ENCODE measurements at regions of chr18 and their contacts with region 1.

Region 1: GRCh38 chr18:13381944-13382365 is 163.4 kb downstream of the LDLRAD4 start:
- DNase-seq: no peak
- ATAC-seq: peak; percentile 31; the same call in 2 of the 3 replicates
- H3K4me3 ChIP-seq: 0 out of 2 replicates have a peak overlapping the region, but pooled peaks have one; percentile 15
- H3K27ac ChIP-seq: no peak overlapping the region
- H3K4me1 ChIP-seq: peaks cover 5% of the 10 kb centered on the region
- H3K27me3 ChIP-seq: no peaks in the 10 kb centered on the region; a peak in 1 of 4 replicates
- CTCF ChIP-seq: no peak
- EP300 ChIP-seq: no peak
- POLR2A ChIP-seq: no peak
- RAD21 ChIP-seq: no peak

Region 2: GRCh38 chr18:13319629-13320028 is 62.3 kb before region 1 on chr18:
- CTCF ChIA-PET with region 1: no interaction called
- POLR2A ChIA-PET with region 1: no interaction called
- RAD21 ChIA-PET with region 1: no interaction called
- SMC1A ChIA-PET with region 1: no interaction called
- in situ Hi-C with region 1: no loop called
- intact Hi-C with region 1: loop called (anchors 10 kb)
- DNase-seq: no peak
- ATAC-seq: no peak
- H3K4me3 ChIP-seq: no peak overlapping the region
- H3K27ac ChIP-seq: no peak overlapping the region
- H3K4me1 ChIP-seq: no peaks in the 10 kb centered on the region
- H3K27me3 ChIP-seq: no peaks in the 10 kb centered on the region
- CTCF ChIP-seq: no peak
- EP300 ChIP-seq: no peak
- POLR2A ChIP-seq: no peak
- RAD21 ChIP-seq: no peak

Region 3: DNA sequence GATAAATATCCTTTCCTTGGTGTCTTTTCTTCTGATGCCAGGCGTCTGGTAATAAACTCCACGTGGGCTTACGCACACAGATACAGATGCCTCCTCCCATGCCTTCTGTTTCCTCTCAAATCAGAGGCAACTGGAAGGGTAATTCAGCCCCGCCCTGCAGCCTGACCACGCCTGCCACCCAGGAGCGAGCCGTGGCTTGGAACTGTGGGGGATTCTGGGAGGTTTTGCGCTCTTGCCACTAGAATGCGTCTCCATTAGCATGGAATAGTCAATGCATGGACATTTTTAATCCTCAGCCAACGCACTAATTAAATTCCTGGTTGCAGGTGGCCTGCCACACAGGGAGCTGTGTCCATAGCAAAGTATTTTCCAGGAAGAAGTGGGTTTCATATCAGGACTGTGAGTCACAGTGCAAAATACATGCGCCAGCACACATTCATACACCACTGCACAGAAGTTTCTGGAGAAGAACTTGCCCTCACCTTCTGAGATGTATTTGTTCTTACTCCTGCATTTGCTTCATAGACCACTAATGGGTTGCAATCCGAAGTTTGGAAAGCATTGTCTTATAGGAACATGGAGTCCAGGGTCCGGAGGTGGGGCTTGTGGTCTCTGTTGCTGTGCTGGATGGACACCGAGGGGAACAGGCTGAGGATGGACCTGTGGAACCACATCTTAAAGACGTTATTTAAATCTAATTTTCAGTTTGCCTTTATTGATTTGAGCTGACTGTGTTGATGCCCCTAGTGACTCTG is 12.0 kb before region 1 on chr18:
- CTCF ChIA-PET with region 1: no interaction called
- POLR2A ChIA-PET with region 1: no interaction called
- RAD21 ChIA-PET with region 1: no interaction called
- SMC1A ChIA-PET with region 1: no interaction called
- in situ Hi-C with region 1: no loop called
- intact Hi-C with region 1: no loop called
- DNase-seq: no peak
- ATAC-seq: no peak
- H3K4me3 ChIP-seq: no peak overlapping the region
- H3K27ac ChIP-seq: no peak overlapping the region
- H3K4me1 ChIP-seq: peaks cover 13% of the 10 kb centered on the region
- H3K27me3 ChIP-seq: no peaks in the 10 kb centered on the region; a peak in 1 of 4 replicates
- CTCF ChIP-seq: no peak
- EP300 ChIP-seq: no peak
- POLR2A ChIP-seq: no peak
- RAD21 ChIP-seq: no peak

Region 4: GRCh38 chr18:13464432-13465123 is 82.6 kb after region 1 on chr18:
- CTCF ChIA-PET with region 1: no interaction called
- POLR2A ChIA-PET with region 1: no interaction called
- RAD21 ChIA-PET with region 1: no interaction called
- SMC1A ChIA-PET with region 1: no interaction called
- in situ Hi-C with region 1: no loop called
- intact Hi-C with region 1: no loop called
- DNase-seq: peak; percentile 44
- ATAC-seq: peak; percentile 86
- H3K4me3 ChIP-seq: peak overlapping the region; percentile 52
- H3K27ac ChIP-seq: peak overlapping the region; percentile 29
- H3K4me1 ChIP-seq: peaks cover 9% of the 10 kb centered on the region; the same call in 1 of the 2 replicates
- H3K27me3 ChIP-seq: no peaks in the 10 kb centered on the region
- CTCF ChIP-seq: 0 out of 6 replicates have a peak, but pooled peaks of 1 of the 3 experiments have one; percentile 14
- EP300 ChIP-seq: no peak
- POLR2A ChIP-seq: peak; percentile 80
- RAD21 ChIP-seq: no peak

Measured in GM12878 (cell line).